Left ventricle myocardium inferior (tissue), 1 donor: ENCODE measurements at regions of chr11 and their contacts with region 1.

Region 1: DNA sequence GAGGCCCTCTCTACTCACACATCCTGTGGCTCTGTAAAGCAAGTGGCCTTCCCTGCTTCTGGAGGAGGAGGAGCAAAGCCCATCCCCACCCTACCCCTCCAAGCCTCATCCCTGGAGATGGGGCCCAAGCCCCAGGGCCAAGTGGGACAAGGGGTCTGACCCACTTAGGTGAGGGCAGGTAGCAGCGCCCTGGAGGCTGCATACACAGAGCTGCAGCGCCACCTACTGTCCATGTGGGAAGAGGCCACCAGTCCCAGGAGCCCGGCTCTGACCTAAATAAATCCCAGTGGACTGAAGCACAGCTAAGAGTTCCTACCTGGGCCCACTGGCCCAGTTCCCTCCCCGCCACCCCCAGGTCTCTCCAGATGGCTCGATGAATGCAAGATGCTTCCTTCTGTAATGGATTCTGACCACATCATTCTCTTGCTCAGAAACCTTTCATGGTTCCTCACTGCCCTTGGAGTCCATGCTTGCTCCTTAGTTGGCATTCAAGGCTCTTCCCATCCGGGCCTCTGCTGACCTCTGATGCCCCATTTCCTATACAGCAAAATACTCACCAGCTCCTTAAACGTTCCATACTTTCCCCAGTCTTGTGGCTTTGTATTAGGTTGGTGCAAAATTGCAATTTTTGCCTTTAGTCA is 62.1 kb downstream of the THAP12 start:
- DNase-seq: peak; percentile 76
- H3K4me3 ChIP-seq: no peak overlapping the region
- H3K27ac ChIP-seq: no peak overlapping the region
- H3K4me1 ChIP-seq: peaks cover 19% of the 10 kb centered on the region
- H3K27me3 ChIP-seq: peaks cover 29% of the 10 kb centered on the region
- CTCF ChIP-seq: peak; percentile 96

Region 2: GRCh38 chr11:76207642-76208401 is 111.0 kb before region 1 on chr11:
- intact Hi-C with region 1: loop called (anchors 2 kb)
- DNase-seq: peak; percentile 81
- H3K4me3 ChIP-seq: peak overlapping the region; percentile 70
- H3K27ac ChIP-seq: peak overlapping the region; percentile 75
- H3K4me1 ChIP-seq: peaks cover 60% of the 10 kb centered on the region
- H3K27me3 ChIP-seq: peaks cover 8% of the 10 kb centered on the region
- CTCF ChIP-seq: peak; percentile 99